ENCODE measurements at regions of chr5 and their contacts with region 1.

Region 1: GRCh38 chr5:139968547-139969261 is 74.4 kb downstream of the NRG2 start:
- DNase-seq: peak; percentile 80 to 92 (median 88)
- ATAC-seq: peak; percentile 100
- H3K4me3 ChIP-seq: no peak overlapping the region
- H3K4me3 Mint-ChIP-seq: no peak overlapping the region
- H3K27ac ChIP-seq: no peak overlapping the region
- H3K27ac Mint-ChIP-seq: no peak overlapping the region
- H3K4me1 ChIP-seq: no peaks in the 10 kb centered on the region
- H3K4me1 Mint-ChIP-seq: no peaks in the 10 kb centered on the region
- H3K27me3 ChIP-seq: no peaks in the 10 kb centered on the region
- H3K27me3 Mint-ChIP-seq: peaks cover 5% of the 10 kb centered on the region
- CTCF ChIP-seq: peak; percentile 99

Region 2: GRCh38 chr5:138772986-138773594 is 1195.6 kb before region 1 on chr5:
- CTCF ChIA-PET with region 1: no interaction called
- POLR2A ChIA-PET with region 1: no interaction called
- intact Hi-C with region 1: no loop called
- DNase-seq: no peak
- ATAC-seq: no peak
- H3K4me3 ChIP-seq: no peak overlapping the region
- H3K4me3 Mint-ChIP-seq: no peak overlapping the region
- H3K27ac ChIP-seq: no peak overlapping the region
- H3K27ac Mint-ChIP-seq: no peak overlapping the region
- H3K4me1 ChIP-seq: no peaks in the 10 kb centered on the region
- H3K4me1 Mint-ChIP-seq: no peaks in the 10 kb centered on the region
- H3K27me3 ChIP-seq: no peaks in the 10 kb centered on the region
- H3K27me3 Mint-ChIP-seq: peaks cover 17% of the 10 kb centered on the region
- CTCF ChIP-seq: no peak

Region 3: GRCh38 chr5:139733698-139734538 is 234.8 kb before region 1 on chr5:
- CTCF ChIA-PET with region 1: no interaction called
- POLR2A ChIA-PET with region 1: no interaction called
- intact Hi-C with region 1: no loop called
- DNase-seq: peak in 1 of 9 experiments; percentile 2
- ATAC-seq: no peak
- H3K4me3 ChIP-seq: no peak overlapping the region
- H3K4me3 Mint-ChIP-seq: no peak overlapping the region
- H3K27ac ChIP-seq: no peak overlapping the region
- H3K27ac Mint-ChIP-seq: no peak overlapping the region
- H3K4me1 ChIP-seq: no peaks in the 10 kb centered on the region
- H3K4me1 Mint-ChIP-seq: no peaks in the 10 kb centered on the region
- H3K27me3 ChIP-seq: no peaks in the 10 kb centered on the region
- H3K27me3 Mint-ChIP-seq: no peaks in the 10 kb centered on the region
- CTCF ChIP-seq: no peak

Region 4: GRCh38 chr5:139774980-139775661 is 193.6 kb before region 1 on chr5:
- CTCF ChIA-PET with region 1: interaction called, 26 read pairs
- POLR2A ChIA-PET with region 1: no interaction called
- intact Hi-C with region 1: no loop called
- DNase-seq: peak; percentile 63 to 87 (median 79)
- ATAC-seq: peak; percentile 100
- H3K4me3 ChIP-seq: no peak overlapping the region
- H3K4me3 Mint-ChIP-seq: peak overlapping the region; percentile 29
- H3K27ac ChIP-seq: no peak overlapping the region
- H3K27ac Mint-ChIP-seq: no peak overlapping the region
- H3K4me1 ChIP-seq: no peaks in the 10 kb centered on the region
- H3K4me1 Mint-ChIP-seq: peaks cover 7% of the 10 kb centered on the region
- H3K27me3 ChIP-seq: no peaks in the 10 kb centered on the region
- H3K27me3 Mint-ChIP-seq: peaks cover 2% of the 10 kb centered on the region
- CTCF ChIP-seq: peak; percentile 89

Region 5: GRCh38 chr5:139795074-139796001 is 173.4 kb before region 1 on chr5 and contains the start of gene PSD2:
- CTCF ChIA-PET with region 1: interaction called, 27 read pairs
- POLR2A ChIA-PET with region 1: no interaction called
- intact Hi-C with region 1: no loop called
- DNase-seq: peak in 3 of 9 experiments; percentile 17 to 44 (median 42)
- ATAC-seq: peak; percentile 41
- H3K4me3 ChIP-seq: peak within 1 kb of the TSS in 1 of 2 experiments; percentile 19
- H3K4me3 Mint-ChIP-seq: peak within 1 kb of the TSS; percentile 71
- H3K27ac ChIP-seq: no peak within 1 kb of the TSS
- H3K27ac Mint-ChIP-seq: no peak within 1 kb of the TSS
- H3K4me1 ChIP-seq: peaks cover 10% of the 10 kb centered on the region
- H3K4me1 Mint-ChIP-seq: peaks cover 11% of the 10 kb centered on the region
- H3K27me3 ChIP-seq: peaks cover 10 to 23% of the 10 kb centered on the region in 2 experiments
- H3K27me3 Mint-ChIP-seq: peaks cover 51% of the 10 kb centered on the region
- CTCF ChIP-seq: no peak
- total RNA-seq, gene PSD2: 0.17 to 0.30 TPM

Region 6: GRCh38 chr5:139872052-139872766 is 96.5 kb before region 1 on chr5:
- CTCF ChIA-PET with region 1: interaction called, 9 read pairs
- POLR2A ChIA-PET with region 1: no interaction called
- intact Hi-C with region 1: loop called in 1 of 2 experiments (anchors 5 kb)
- DNase-seq: no peak
- ATAC-seq: no peak
- H3K4me3 ChIP-seq: no peak overlapping the region
- H3K4me3 Mint-ChIP-seq: no peak overlapping the region
- H3K27ac ChIP-seq: no peak overlapping the region
- H3K27ac Mint-ChIP-seq: no peak overlapping the region
- H3K4me1 ChIP-seq: no peaks in the 10 kb centered on the region
- H3K4me1 Mint-ChIP-seq: no peaks in the 10 kb centered on the region
- H3K27me3 ChIP-seq: no peaks in the 10 kb centered on the region
- H3K27me3 Mint-ChIP-seq: peaks cover 12% of the 10 kb centered on the region
- CTCF ChIP-seq: no peak

Region 7: GRCh38 chr5:139955053-139955605 is 13.6 kb before region 1 on chr5:
- CTCF ChIA-PET with region 1: interaction called, 67 read pairs
- POLR2A ChIA-PET with region 1: interaction called, 3 read pairs
- intact Hi-C with region 1: no loop called
- DNase-seq: no peak
- ATAC-seq: no peak
- H3K4me3 ChIP-seq: no peak overlapping the region
- H3K4me3 Mint-ChIP-seq: no peak overlapping the region
- H3K27ac ChIP-seq: no peak overlapping the region
- H3K27ac Mint-ChIP-seq: no peak overlapping the region
- H3K4me1 ChIP-seq: no peaks in the 10 kb centered on the region
- H3K4me1 Mint-ChIP-seq: no peaks in the 10 kb centered on the region
- H3K27me3 ChIP-seq: no peaks in the 10 kb centered on the region
- H3K27me3 Mint-ChIP-seq: peaks cover 25% of the 10 kb centered on the region
- CTCF ChIP-seq: no peak

Region 8: DNA sequence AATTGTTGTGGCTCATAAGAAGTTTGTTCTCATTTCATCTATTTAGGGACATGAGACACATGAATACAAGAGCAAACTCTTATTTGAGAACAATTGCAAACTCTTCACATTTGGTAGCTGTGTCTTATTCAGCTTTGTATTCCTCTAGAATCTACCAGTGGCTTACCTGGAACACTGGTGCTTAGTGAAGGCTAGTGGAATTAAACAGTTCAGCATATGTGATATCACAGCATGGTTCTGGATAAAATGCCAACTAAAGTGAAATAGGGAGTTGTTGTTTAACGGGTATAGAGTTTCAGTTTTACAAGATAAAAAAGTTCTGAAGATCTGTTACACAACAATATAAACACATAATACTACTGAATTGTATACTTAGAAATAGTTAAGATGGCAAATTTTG is 25.5 kb after region 1 on chr5:
- CTCF ChIA-PET with region 1: interaction called, 11 read pairs
- POLR2A ChIA-PET with region 1: no interaction called
- intact Hi-C with region 1: no loop called
- DNase-seq: no peak
- ATAC-seq: no peak
- H3K4me3 ChIP-seq: no peak overlapping the region
- H3K4me3 Mint-ChIP-seq: no peak overlapping the region
- H3K27ac ChIP-seq: no peak overlapping the region
- H3K27ac Mint-ChIP-seq: no peak overlapping the region
- H3K4me1 ChIP-seq: no peaks in the 10 kb centered on the region
- H3K4me1 Mint-ChIP-seq: no peaks in the 10 kb centered on the region
- H3K27me3 ChIP-seq: peaks cover 0 to 2% of the 10 kb centered on the region in 2 experiments
- H3K27me3 Mint-ChIP-seq: peaks cover 41% of the 10 kb centered on the region
- CTCF ChIP-seq: no peak

Measured in CD8-positive, alpha-beta T cell (primary cell).